ENCODE measurements at regions of chrX and their contacts with region 1.

Region 1: GRCh38 chrX:53558646-53559045 is 124.5 kb upstream of the HSD17B10 start:
- DNase-seq: no peak
- ATAC-seq: no peak
- H3K4me3 ChIP-seq: no peak overlapping the region
- H3K4me3 Mint-ChIP-seq: no peak overlapping the region
- H3K27ac ChIP-seq: no peak overlapping the region
- H3K27ac Mint-ChIP-seq: no peak overlapping the region
- H3K4me1 ChIP-seq: no peaks in the 10 kb centered on the region
- H3K4me1 Mint-ChIP-seq: no peaks in the 10 kb centered on the region
- H3K27me3 ChIP-seq: no peaks in the 10 kb centered on the region
- H3K27me3 Mint-ChIP-seq: no peaks in the 10 kb centered on the region
- CTCF ChIP-seq: no peak

Region 2: GRCh38 chrX:53544940-53545339 is 13.7 kb before region 1 on chrX:
- CTCF ChIA-PET with region 1: no interaction called
- POLR2A ChIA-PET with region 1: no interaction called
- intact Hi-C with region 1: loop called in 1 of 2 experiments (anchors 2 kb)
- DNase-seq: no peak
- ATAC-seq: no peak
- H3K4me3 ChIP-seq: no peak overlapping the region
- H3K4me3 Mint-ChIP-seq: no peak overlapping the region
- H3K27ac ChIP-seq: no peak overlapping the region
- H3K27ac Mint-ChIP-seq: no peak overlapping the region
- H3K4me1 ChIP-seq: no peaks in the 10 kb centered on the region
- H3K4me1 Mint-ChIP-seq: no peaks in the 10 kb centered on the region
- H3K27me3 ChIP-seq: no peaks in the 10 kb centered on the region
- H3K27me3 Mint-ChIP-seq: no peaks in the 10 kb centered on the region
- CTCF ChIP-seq: no peak